ENCODE measurements at regions of chr2 and their contacts with region 1.

Region 1: DNA sequence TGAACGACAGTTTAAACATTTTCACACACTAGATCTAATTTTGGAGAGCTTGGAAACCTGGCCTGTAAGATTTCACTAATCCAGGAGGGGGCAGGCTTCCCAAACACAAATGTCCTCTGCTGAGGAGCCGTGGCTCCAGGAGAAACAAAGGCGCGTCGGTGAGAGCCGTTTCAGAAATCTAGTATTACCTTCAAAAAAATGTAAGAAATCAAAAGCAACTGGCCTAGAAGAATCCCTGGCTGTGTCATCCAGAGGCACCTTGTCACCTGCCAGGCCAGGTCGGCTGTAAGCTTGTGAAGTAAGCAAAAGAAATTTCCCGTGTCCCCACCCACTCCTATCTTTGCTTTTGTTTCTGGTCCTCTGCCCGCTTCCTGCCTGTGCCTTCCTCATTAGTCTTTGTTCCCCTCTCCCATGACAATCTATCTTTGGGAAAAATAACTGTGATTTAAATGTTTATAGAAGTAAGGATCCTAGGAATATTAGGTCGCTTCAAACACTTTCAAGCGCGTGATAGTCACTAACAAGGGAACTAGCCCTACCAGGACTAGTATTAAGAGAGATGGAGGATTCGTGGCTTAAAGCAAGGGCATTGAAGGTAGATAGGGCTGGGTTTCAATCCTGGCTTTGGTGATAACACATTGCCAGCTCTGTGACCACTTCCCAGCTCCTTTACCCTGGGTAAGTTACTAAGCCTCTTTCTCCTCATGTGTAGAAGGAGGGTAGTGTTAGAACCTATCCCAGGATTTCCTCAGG is 99.5 kb upstream of the STK39 start:
- DNase-seq: peak; percentile 45 to 48
- ATAC-seq: peak; percentile 86 to 89
- H3K4me3 ChIP-seq: peak overlapping the region; percentile 52 to 57 (median 56)
- H3K27ac ChIP-seq: no peak overlapping the region
- H3K4me1 ChIP-seq: no peaks in the 10 kb centered on the region
- H3K27me3 ChIP-seq: no peaks in the 10 kb centered on the region
- CTCF ChIP-seq: peak; percentile 77 to 84 (median 81)
- POLR2A ChIP-seq: no peak

Region 2: GRCh38 chr2:168687314-168687713 is 340.4 kb after region 1 on chr2:
- in situ Hi-C with region 1: loop called (anchors 5 to 25 kb)
- intact Hi-C with region 1: loop called (anchors 2 kb)
- DNase-seq: no peak
- ATAC-seq: peak in 1 of 2 donors; percentile 54
- H3K4me3 ChIP-seq: no peak overlapping the region
- H3K27ac ChIP-seq: no peak overlapping the region
- H3K4me1 ChIP-seq: peaks cover 0 to 2% of the 10 kb centered on the region in 2 donors
- H3K27me3 ChIP-seq: no peaks in the 10 kb centered on the region
- CTCF ChIP-seq: peak; percentile 26 to 49 (median 40)
- POLR2A ChIP-seq: no peak

Region 3: GRCh38 chr2:168751104-168751740 is 404.3 kb after region 1 on chr2:
- in situ Hi-C with region 1: loop called (anchors 5 to 10 kb)
- intact Hi-C with region 1: no loop called
- DNase-seq: no peak
- ATAC-seq: no peak
- H3K4me3 ChIP-seq: no peak overlapping the region
- H3K27ac ChIP-seq: no peak overlapping the region
- H3K4me1 ChIP-seq: peaks cover 6 to 24% of the 10 kb centered on the region in 2 donors
- H3K27me3 ChIP-seq: no peaks in the 10 kb centered on the region
- CTCF ChIP-seq: no peak
- POLR2A ChIP-seq: no peak

Region 4: DNA sequence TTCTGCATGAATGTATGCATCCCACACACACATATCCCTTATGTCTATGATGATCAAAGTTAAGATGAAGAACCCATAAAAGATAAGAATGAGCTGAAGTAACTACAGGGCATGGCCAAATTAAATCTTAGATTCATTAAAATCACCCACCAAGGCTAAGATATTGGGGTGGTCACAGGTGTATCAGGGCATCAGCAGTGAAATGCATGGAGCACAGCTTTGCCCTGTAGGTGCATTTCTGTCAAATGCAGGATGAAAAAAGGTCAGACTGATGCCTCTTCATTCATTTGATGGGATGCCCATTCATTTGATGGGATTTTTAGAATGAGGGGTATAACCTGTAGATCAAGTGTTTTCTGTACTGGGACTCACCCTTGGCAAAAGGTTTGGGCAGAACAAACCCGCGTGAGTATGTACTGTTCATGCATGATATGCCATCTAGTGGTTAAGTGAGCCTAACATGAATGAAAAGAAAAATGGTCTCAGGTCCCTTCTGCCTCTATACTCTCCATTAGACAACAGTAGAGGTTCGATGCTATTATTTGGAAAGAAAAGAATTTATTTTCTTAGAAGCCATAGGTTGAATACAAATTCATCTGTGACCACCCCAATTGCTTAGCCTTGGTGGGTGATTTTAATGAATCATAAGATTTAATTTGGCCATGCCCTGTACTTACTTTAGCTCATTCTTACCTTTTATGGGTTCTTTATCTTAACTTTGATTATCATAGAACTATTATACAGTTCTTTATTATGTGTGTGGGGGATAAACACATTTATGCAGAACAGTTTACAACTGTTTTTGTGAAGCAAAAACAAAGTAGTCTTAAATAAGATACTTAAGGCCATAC is 412.3 kb after region 1 on chr2:
- in situ Hi-C with region 1: loop called (anchors 5 to 10 kb)
- intact Hi-C with region 1: loop called (anchors 1 kb)
- DNase-seq: no peak
- ATAC-seq: peak; percentile 77 to 82
- H3K4me3 ChIP-seq: no peak overlapping the region
- H3K27ac ChIP-seq: no peak overlapping the region
- H3K4me1 ChIP-seq: peaks cover 6 to 13% of the 10 kb centered on the region in 2 donors
- H3K27me3 ChIP-seq: no peaks in the 10 kb centered on the region
- CTCF ChIP-seq: peak; percentile 21 to 62 (median 49)
- POLR2A ChIP-seq: no peak

Region 5: GRCh38 chr2:168912901-168913369 is 566.0 kb after region 1 on chr2:
- in situ Hi-C with region 1: loop called (anchors 5 to 10 kb)
- intact Hi-C with region 1: no loop called
- DNase-seq: peak; percentile 68 to 88
- ATAC-seq: peak; percentile 85 to 94
- H3K4me3 ChIP-seq: peak overlapping the region; percentile 35 to 40 (median 40)
- H3K27ac ChIP-seq: peak overlapping the region; percentile 27 to 74 (median 62)
- H3K4me1 ChIP-seq: peaks cover 0 to 12% of the 10 kb centered on the region in 2 donors
- H3K27me3 ChIP-seq: no peaks in the 10 kb centered on the region
- CTCF ChIP-seq: no peak
- POLR2A ChIP-seq: no peak

Region 6: DNA sequence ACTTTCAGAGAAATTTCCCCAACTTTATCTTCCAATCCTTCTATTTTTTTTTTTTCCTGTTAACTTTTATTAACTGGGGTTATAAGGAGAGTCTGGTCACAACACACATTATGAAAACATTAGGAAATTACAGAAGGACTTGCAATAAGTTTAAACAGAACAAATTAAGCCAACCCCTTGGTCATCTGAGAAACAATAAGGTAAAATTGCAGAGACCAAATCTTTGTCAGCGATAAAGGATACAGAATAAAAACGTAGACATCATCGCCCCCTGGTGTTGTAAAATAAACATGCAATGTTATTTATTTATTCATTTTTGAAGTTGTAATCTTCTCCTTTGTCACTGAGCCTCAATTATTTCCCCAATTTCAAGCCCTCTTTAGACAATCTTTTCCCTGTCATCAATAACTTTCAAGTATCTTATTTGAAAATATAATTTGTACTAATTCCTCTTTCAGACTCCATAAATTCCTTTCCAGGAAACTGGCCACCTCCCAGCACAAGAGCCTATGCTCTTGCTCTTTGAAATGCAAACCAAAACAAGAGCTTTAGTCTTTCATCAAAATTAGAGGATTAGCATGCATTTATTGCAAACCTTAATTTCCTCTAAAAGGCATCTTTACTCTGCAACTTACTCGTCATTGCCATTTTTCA is 573.7 kb after region 1 on chr2:
- in situ Hi-C with region 1: loop called (anchors 5 to 10 kb)
- intact Hi-C with region 1: loop called (anchors 2 kb)
- DNase-seq: no peak
- ATAC-seq: peak; percentile 33 to 72
- H3K4me3 ChIP-seq: no peak overlapping the region
- H3K27ac ChIP-seq: no peak overlapping the region
- H3K4me1 ChIP-seq: peaks cover 0 to 3% of the 10 kb centered on the region in 2 donors
- H3K27me3 ChIP-seq: no peaks in the 10 kb centered on the region
- CTCF ChIP-seq: peak; percentile 50 to 73 (median 67)
- POLR2A ChIP-seq: no peak